OCI-LY7 (cell line): ENCODE measurements at regions of chr17 and their contacts with region 1.

Region 1: GRCh38 chr17:79248843-79249493 is 174.3 kb downstream of the ENGASE start:
- DNase-seq: no peak
- H3K4me3 ChIP-seq: no peak overlapping the region
- H3K27ac ChIP-seq: no peak overlapping the region
- H3K4me1 ChIP-seq: no peaks in the 10 kb centered on the region
- CTCF ChIP-seq: no peak

Region 2: GRCh38 chr17:79114458-79115301 is 134.3 kb before region 1 on chr17:
- CTCF ChIA-PET with region 1: no interaction called
- POLR2A ChIA-PET with region 1: no interaction called
- intact Hi-C with region 1: no loop called
- DNase-seq: no peak
- H3K4me3 ChIP-seq: no peak overlapping the region
- H3K27ac ChIP-seq: no peak overlapping the region
- H3K4me1 ChIP-seq: no peaks in the 10 kb centered on the region
- CTCF ChIP-seq: no peak

Region 3: DNA sequence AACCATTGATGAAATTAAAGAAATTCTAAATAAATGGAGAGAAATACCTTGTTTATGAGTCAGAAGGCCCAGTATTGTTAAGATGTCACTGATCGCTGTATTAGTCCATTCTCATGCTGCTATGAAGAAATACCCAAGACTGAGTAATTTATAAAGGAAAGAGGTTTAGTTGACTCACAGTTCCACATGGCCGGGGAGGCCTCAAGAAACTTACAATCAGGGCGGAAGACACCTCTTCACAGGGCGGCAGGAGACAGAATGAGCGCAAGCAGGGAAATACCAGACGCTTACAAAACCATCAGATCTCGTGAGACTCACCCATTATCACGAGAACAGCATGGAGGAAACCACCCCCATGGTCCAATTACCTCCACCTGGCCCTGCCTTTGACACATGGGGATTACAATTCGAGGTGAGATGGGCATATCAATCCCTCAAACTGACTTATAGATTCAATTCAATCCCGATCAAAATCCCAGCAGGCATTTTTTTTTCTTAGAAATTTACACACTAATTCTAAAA is 17.1 kb before region 1 on chr17:
- CTCF ChIA-PET with region 1: no interaction called
- POLR2A ChIA-PET with region 1: no interaction called
- intact Hi-C with region 1: loop called (anchors 2 kb)
- DNase-seq: no peak
- H3K4me3 ChIP-seq: no peak overlapping the region
- H3K27ac ChIP-seq: no peak overlapping the region
- H3K4me1 ChIP-seq: no peaks in the 10 kb centered on the region
- CTCF ChIP-seq: no peak

Region 4: GRCh38 chr17:79549141-79549915 is 300.4 kb after region 1 on chr17:
- CTCF ChIA-PET with region 1: no interaction called
- POLR2A ChIA-PET with region 1: no interaction called
- intact Hi-C with region 1: no loop called
- DNase-seq: no peak
- H3K4me3 ChIP-seq: no peak overlapping the region
- H3K27ac ChIP-seq: no peak overlapping the region
- H3K4me1 ChIP-seq: no peaks in the 10 kb centered on the region
- CTCF ChIP-seq: no peak